ENCODE measurements at regions of chr5 and their contacts with region 1.

Region 1: GRCh38 chr5:43040287-43041098 is at the start of gene ANXA2R:
- DNase-seq: peak; percentile 96
- ATAC-seq: peak; percentile 56
- H3K4me3 Mint-ChIP-seq: peak within 1 kb of the TSS; percentile 81
- H3K27ac Mint-ChIP-seq: peak within 1 kb of the TSS; percentile 94
- H3K4me1 Mint-ChIP-seq: peaks cover 39% of the 10 kb centered on the region
- H3K27me3 Mint-ChIP-seq: no peaks in the 10 kb centered on the region
- total RNA-seq, gene ANXA2R: 3.2 to 4.6 TPM

Region 2: GRCh38 chr5:41924872-41925554 is 1115.5 kb before region 1 on chr5 and contains the start of gene FBXO4:
- CTCF ChIA-PET with region 1: no interaction called
- POLR2A ChIA-PET with region 1: no interaction called
- intact Hi-C with region 1: loop called in 1 of 2 experiments (anchors 10 kb)
- DNase-seq: peak; percentile 94
- ATAC-seq: peak; percentile 98
- H3K4me3 Mint-ChIP-seq: peak within 1 kb of the TSS; percentile 85
- H3K27ac Mint-ChIP-seq: peak within 1 kb of the TSS; percentile 99
- H3K4me1 Mint-ChIP-seq: peaks cover 24% of the 10 kb centered on the region
- H3K27me3 Mint-ChIP-seq: no peaks in the 10 kb centered on the region
- total RNA-seq, gene FBXO4: 18.8 to 22.3 TPM

Region 3: GRCh38 chr5:42950440-42951292 is 89.8 kb before region 1 on chr5:
- CTCF ChIA-PET with region 1: interaction called, 28 read pairs
- POLR2A ChIA-PET with region 1: interaction called, 4 read pairs
- intact Hi-C with region 1: loop called (anchors 1 kb)
- DNase-seq: peak; percentile 82
- ATAC-seq: peak; percentile 59
- H3K4me3 Mint-ChIP-seq: peak overlapping the region; percentile 83
- H3K27ac Mint-ChIP-seq: peak overlapping the region; percentile 91
- H3K4me1 Mint-ChIP-seq: peaks cover 17% of the 10 kb centered on the region
- H3K27me3 Mint-ChIP-seq: no peaks in the 10 kb centered on the region

Region 4: DNA sequence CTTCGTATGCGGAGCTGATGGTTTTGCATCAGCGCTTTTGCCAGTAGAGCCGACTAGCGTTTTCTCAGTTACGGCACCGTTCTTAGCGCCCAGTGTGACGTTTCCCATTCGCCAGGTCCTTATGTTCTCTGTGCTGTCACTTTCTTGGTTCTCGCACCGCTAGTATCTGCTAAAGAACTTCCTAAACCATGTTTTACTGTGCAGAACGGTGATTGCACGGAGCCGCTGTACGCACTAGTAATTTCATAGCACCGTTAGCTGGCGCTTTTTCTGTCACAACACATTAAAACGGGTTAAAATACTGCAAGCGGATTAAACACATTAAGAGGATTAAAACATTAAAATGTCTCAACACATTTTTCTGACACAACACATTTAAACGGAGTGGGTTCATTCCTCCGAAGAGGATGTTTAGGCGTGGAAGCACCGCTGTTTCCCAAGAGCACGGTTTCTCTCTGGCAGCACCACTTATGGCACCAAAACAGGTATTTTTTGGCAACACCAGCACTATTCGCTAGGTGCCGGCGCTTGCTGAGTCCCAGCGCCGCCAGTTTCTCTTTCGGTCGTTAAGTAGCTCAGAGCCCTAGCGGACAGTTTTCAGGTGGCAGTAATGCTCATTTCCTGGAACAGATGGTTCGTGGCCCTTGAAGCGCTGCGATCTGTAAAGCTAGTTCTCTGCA is 20.7 kb before region 1 on chr5:
- CTCF ChIA-PET with region 1: interaction called, 158 read pairs
- POLR2A ChIA-PET with region 1: interaction called, 23 read pairs
- intact Hi-C with region 1: loop called (anchors 1 kb)
- DNase-seq: peak; percentile 91
- ATAC-seq: peak; percentile 70
- H3K4me3 Mint-ChIP-seq: peak overlapping the region; percentile 94
- H3K27ac Mint-ChIP-seq: peak overlapping the region; percentile 99
- H3K4me1 Mint-ChIP-seq: peaks cover 33% of the 10 kb centered on the region
- H3K27me3 Mint-ChIP-seq: no peaks in the 10 kb centered on the region

Region 5: DNA sequence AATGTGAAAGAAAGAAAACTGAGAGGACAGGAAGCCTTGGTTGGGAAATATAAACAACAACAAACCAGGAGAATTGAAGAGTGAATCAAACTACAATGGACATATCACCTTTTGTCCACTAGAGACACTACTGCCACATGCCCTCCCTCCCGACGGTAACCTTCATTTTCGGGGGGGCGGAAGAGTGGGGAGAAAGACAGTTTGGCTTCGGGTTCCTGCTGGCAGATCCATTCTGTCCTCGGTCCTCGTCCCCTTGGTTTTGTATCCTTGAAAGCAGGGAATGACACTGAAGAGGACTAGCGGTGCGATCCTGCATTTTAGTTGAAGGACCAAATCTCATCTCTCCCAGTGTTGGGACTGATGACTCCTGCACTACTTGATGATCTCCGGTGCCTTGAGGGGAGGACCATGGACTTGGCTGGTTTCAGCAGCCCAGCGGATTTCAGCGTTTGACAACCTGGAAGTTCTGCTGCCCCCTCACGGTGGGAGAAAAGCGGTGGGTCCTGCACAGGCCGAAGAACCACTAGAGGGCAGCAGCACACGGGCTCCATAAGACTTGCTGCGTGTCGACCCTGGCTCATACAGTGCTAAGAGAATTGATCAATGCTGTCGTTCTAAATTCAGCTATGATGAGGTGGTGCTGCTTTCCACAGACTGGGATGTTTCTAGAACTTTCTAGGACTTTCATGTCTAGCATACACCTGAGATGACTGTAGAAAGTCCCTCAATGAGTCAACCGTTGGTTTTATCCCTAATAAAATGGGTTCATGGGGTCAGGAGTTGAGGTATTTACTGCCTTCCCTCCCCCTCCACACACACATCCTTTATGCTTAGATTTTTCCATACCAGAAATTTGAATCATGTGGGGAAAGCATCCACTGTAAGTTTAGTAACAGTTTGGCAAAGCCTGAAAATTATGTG is 65.1 kb after region 1 on chr5:
- CTCF ChIA-PET with region 1: interaction called, 3 read pairs
- POLR2A ChIA-PET with region 1: no interaction called
- intact Hi-C with region 1: loop called in 1 of 2 experiments (anchors 1 kb)
- DNase-seq: peak; percentile 93
- ATAC-seq: peak; percentile 91
- H3K4me3 Mint-ChIP-seq: peak overlapping the region; percentile 71
- H3K27ac Mint-ChIP-seq: peak overlapping the region; percentile 91
- H3K4me1 Mint-ChIP-seq: peaks cover 43% of the 10 kb centered on the region
- H3K27me3 Mint-ChIP-seq: no peaks in the 10 kb centered on the region

Region 6: GRCh38 chr5:43231977-43232376 is 191.5 kb after region 1 on chr5:
- CTCF ChIA-PET with region 1: no interaction called
- POLR2A ChIA-PET with region 1: no interaction called
- intact Hi-C with region 1: no loop called
- DNase-seq: peak; percentile 49
- ATAC-seq: peak; percentile 53
- H3K4me3 Mint-ChIP-seq: no peak overlapping the region
- H3K27ac Mint-ChIP-seq: no peak overlapping the region
- H3K4me1 Mint-ChIP-seq: peaks cover 4% of the 10 kb centered on the region
- H3K27me3 Mint-ChIP-seq: no peaks in the 10 kb centered on the region